ENCODE measurements at regions of chr7 and their contacts with region 1.

Region 1: GRCh38 chr7:132919771-132920170 is 162.1 kb downstream of the CHCHD3 start:
- DNase-seq: no peak
- H3K4me3 ChIP-seq: no peak overlapping the region
- H3K27ac ChIP-seq: no peak overlapping the region
- H3K4me1 ChIP-seq: no peaks in the 10 kb centered on the region
- H3K27me3 ChIP-seq: no peaks in the 10 kb centered on the region
- CTCF ChIP-seq: no peak

Region 2: DNA sequence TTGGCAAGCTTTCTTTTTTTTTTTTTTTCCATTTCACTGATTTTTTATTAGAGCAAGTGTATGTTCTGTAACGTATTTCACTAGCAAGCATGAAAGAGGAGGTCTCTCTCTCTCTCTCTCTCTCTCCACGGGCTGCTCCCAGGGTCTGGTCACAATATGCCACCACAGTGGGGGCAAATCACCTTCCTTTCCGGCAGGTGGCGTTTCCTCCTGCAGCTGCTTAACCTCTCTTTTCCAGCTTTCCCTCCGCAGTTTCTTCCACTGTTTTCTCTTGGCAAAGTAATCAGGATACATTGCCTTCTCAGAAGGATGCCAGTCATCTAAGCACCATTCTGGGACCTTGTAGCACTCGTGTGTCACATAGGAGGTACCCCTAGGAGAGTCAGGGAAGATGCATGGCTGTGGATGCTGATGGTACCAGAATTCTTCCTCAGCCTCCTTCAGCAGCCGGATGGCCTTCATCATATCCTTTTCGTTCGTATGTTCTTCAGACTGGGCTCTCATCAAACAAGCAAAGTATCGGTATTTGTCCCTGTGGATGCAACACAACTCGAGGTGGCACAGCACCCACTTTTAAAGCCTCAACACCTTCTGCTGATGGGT is 1166.0 kb before region 1 on chr7:
- intact Hi-C with region 1: loop called (anchors 10 kb)
- DNase-seq: no peak
- H3K4me3 ChIP-seq: no peak overlapping the region
- H3K27ac ChIP-seq: no peak overlapping the region
- H3K4me1 ChIP-seq: no peaks in the 10 kb centered on the region
- H3K27me3 ChIP-seq: no peaks in the 10 kb centered on the region
- CTCF ChIP-seq: no peak

Measured in tibial artery (tissue), 4 donors.